IMR-90 (cell line): ENCODE measurements at regions of chr2 and their contacts with region 1.

Region 1: GRCh38 chr2:55282110-55282917 is 13.3 kb upstream of the MTIF2 start:
- DNase-seq: peak; percentile 80
- ATAC-seq: peak; percentile 99
- H3K4me3 ChIP-seq: peak overlapping the region; percentile 70
- H3K27ac ChIP-seq: peak overlapping the region; percentile 70
- H3K4me1 ChIP-seq: 0 out of 2 replicates have a peak, but pooled peaks cover 4% of the 10 kb centered on the region
- H3K27me3 ChIP-seq: no peaks in the 10 kb centered on the region
- CTCF ChIP-seq: no peak
- POLR2A ChIP-seq: peak; percentile 24; the same call in 1 of the 2 replicates
- RAD21 ChIP-seq: no peak

Region 2: DNA sequence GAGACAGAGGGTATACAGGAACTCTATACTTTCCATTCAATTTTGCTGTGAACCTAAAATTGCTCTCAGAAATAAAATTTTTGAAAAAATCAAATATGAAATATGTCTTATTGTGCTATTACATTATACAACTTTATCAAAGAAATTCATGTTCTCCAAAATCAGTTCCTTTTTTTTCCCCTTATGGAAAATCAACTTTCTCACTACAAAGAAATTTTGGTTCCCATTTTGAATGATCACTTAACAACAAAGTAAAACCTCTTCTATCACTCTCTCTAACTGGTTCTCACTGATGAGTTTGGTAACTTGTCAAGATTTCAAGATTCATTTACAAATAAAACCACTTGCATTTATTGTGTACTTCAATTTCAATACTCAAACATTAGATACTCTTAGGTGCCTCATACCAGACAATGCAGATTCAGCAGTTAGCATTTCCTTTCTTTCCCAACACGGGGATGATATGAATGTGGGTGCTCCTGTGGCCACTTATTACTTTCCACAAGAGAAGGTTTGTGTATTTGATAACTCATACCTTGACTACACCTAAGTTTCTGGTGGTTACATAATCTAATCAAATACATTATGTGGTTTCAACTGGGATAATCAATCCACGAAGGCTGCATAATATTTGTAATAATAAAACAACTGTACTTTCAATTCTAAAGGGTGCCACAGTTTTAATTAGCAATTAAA is 1317.9 kb before region 1 on chr2:
- CTCF ChIA-PET with region 1: no interaction called
- POLR2A ChIA-PET with region 1: no interaction called
- dilution Hi-C with region 1: no loop called
- in situ Hi-C with region 1: no loop called
- intact Hi-C with region 1: loop called (anchors 5 kb)
- DNase-seq: no peak
- ATAC-seq: no peak
- H3K4me3 ChIP-seq: no peak overlapping the region
- H3K27ac ChIP-seq: no peak overlapping the region
- H3K4me1 ChIP-seq: peaks cover 14% of the 10 kb centered on the region
- H3K27me3 ChIP-seq: no peaks in the 10 kb centered on the region
- CTCF ChIP-seq: no peak
- POLR2A ChIP-seq: no peak
- RAD21 ChIP-seq: no peak

Region 3: DNA sequence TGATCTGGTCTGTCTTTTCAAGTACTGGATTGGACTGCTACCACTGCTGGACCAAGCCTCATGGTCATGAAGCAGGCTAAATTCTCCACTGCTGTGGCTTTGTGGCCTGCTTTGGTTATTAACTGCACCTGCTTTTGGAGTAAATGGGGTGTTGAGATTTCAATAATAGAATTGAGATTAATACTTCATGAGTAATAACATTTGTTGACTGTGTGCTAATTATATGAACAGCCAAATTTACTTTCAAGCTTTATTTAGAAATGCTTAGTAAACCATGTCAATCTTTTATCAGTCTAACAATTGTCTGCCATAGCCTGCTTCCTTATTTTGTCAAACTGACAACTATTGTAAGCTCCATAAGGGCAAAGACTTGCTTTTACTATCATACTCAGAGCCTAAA is 14.1 kb after region 1 on chr2:
- CTCF ChIA-PET with region 1: no interaction called
- POLR2A ChIA-PET with region 1: no interaction called
- dilution Hi-C with region 1: no loop called
- in situ Hi-C with region 1: no loop called
- intact Hi-C with region 1: no loop called
- DNase-seq: no peak
- ATAC-seq: no peak
- H3K4me3 ChIP-seq: no peak overlapping the region
- H3K27ac ChIP-seq: no peak overlapping the region
- H3K4me1 ChIP-seq: peaks cover 2% of the 10 kb centered on the region; the same call in 1 of the 2 replicates
- H3K27me3 ChIP-seq: no peaks in the 10 kb centered on the region
- CTCF ChIP-seq: no peak
- POLR2A ChIP-seq: no peak
- RAD21 ChIP-seq: no peak

Region 4: DNA sequence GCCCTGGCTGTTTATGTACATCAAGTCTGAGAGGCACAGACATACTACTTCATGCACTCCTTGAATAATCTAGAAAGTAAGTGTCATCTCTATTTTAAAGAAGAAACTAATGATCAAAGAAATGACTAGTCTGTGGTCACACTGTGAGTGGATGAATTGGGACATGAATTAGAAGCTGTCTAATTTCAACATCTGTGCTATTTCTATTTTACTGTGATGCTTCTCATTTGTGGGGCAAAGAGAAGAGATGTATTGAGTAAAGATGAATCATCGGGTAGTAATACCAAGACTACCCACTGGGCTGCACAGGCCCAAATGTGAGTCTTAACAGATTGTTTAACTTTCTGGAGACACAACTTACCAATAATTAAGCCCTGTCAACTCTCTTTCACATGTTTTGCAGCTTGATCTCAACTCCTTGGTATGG is 29.1 kb after region 1 on chr2:
- CTCF ChIA-PET with region 1: no interaction called
- POLR2A ChIA-PET with region 1: no interaction called
- dilution Hi-C with region 1: no loop called
- in situ Hi-C with region 1: no loop called
- intact Hi-C with region 1: no loop called
- DNase-seq: peak; percentile 56
- ATAC-seq: peak; percentile 95
- H3K4me3 ChIP-seq: no peak overlapping the region
- H3K27ac ChIP-seq: no peak overlapping the region
- H3K4me1 ChIP-seq: peaks cover 2% of the 10 kb centered on the region
- H3K27me3 ChIP-seq: no peaks in the 10 kb centered on the region
- CTCF ChIP-seq: peak; percentile 34
- POLR2A ChIP-seq: no peak
- RAD21 ChIP-seq: peak; percentile 31; the same call in 1 of the 2 replicates

Region 5: GRCh38 chr2:55500025-55500424 is 217.7 kb after region 1 on chr2:
- CTCF ChIA-PET with region 1: no interaction called
- POLR2A ChIA-PET with region 1: no interaction called
- dilution Hi-C with region 1: no loop called
- in situ Hi-C with region 1: no loop called
- intact Hi-C with region 1: loop called (anchors 10 kb)
- DNase-seq: peak; percentile 74
- ATAC-seq: peak; percentile 93
- H3K4me3 ChIP-seq: no peak overlapping the region
- H3K27ac ChIP-seq: no peak overlapping the region
- H3K4me1 ChIP-seq: peaks cover 2% of the 10 kb centered on the region; the same call in 1 of the 2 replicates
- H3K27me3 ChIP-seq: no peaks in the 10 kb centered on the region
- CTCF ChIP-seq: no peak
- POLR2A ChIP-seq: no peak
- RAD21 ChIP-seq: no peak